ENCODE measurements at regions of chr11 and their contacts with region 1.

Region 1: GRCh38 chr11:7367803-7368202 is 116.1 kb downstream of the SYT9 start:
- DNase-seq: no peak
- H3K4me3 ChIP-seq: no peak overlapping the region
- H3K4me3 Mint-ChIP-seq: peak overlapping the region; percentile 32
- H3K27ac Mint-ChIP-seq: no peak overlapping the region
- H3K4me1 ChIP-seq: no peaks in the 10 kb centered on the region
- H3K4me1 Mint-ChIP-seq: no peaks in the 10 kb centered on the region
- H3K27me3 ChIP-seq: no peaks in the 10 kb centered on the region
- H3K27me3 Mint-ChIP-seq: peaks cover 13% of the 10 kb centered on the region
- CTCF ChIP-seq: no peak

Region 2: DNA sequence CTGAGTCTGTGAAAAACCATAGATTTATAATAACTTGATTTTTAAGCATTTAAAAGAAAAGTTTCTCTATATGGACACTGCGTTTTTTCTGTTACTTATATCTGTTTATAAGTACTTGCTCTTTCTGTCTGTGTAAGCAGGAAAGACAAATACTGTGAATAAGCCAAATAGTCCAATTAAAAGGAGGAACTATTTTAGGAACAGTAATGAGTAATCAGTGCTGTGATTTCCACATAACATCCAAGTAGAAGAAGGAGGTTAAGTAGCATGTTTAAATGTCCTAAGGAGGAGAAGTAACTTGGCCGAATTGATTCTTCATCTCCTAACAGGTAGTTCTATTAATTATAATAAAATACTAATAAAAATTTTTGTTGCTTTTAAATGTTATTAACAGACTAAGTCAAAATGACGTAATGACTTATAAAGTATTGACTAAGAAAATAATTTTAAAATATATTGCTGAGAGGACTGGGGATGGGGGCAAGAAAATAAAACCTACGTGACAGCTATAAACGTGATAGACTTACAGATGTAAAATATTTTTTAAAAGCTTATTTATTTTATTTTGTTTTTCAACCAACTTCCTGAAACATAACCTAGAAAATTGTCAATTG is 388.3 kb before region 1 on chr11:
- CTCF ChIA-PET with region 1: no interaction called
- POLR2A ChIA-PET with region 1: no interaction called
- intact Hi-C with region 1: no loop called
- DNase-seq: no peak
- H3K4me3 ChIP-seq: no peak overlapping the region
- H3K4me3 Mint-ChIP-seq: no peak overlapping the region
- H3K27ac Mint-ChIP-seq: no peak overlapping the region
- H3K4me1 ChIP-seq: no peaks in the 10 kb centered on the region
- H3K4me1 Mint-ChIP-seq: no peaks in the 10 kb centered on the region
- H3K27me3 ChIP-seq: no peaks in the 10 kb centered on the region
- H3K27me3 Mint-ChIP-seq: no peaks in the 10 kb centered on the region
- CTCF ChIP-seq: no peak

Region 3: GRCh38 chr11:7299393-7299792 is 68.4 kb before region 1 on chr11:
- CTCF ChIA-PET with region 1: no interaction called
- POLR2A ChIA-PET with region 1: no interaction called
- intact Hi-C with region 1: no loop called
- DNase-seq: no peak
- H3K4me3 ChIP-seq: no peak overlapping the region
- H3K4me3 Mint-ChIP-seq: no peak overlapping the region
- H3K27ac Mint-ChIP-seq: no peak overlapping the region
- H3K4me1 ChIP-seq: no peaks in the 10 kb centered on the region
- H3K4me1 Mint-ChIP-seq: no peaks in the 10 kb centered on the region
- H3K27me3 ChIP-seq: no peaks in the 10 kb centered on the region
- H3K27me3 Mint-ChIP-seq: peaks cover 4% of the 10 kb centered on the region
- CTCF ChIP-seq: no peak

Region 4: GRCh38 chr11:7347611-7348431 is 20.0 kb before region 1 on chr11:
- CTCF ChIA-PET with region 1: no interaction called
- POLR2A ChIA-PET with region 1: no interaction called
- intact Hi-C with region 1: loop called (anchors 2 kb)
- DNase-seq: no peak
- H3K4me3 ChIP-seq: no peak overlapping the region
- H3K4me3 Mint-ChIP-seq: no peak overlapping the region
- H3K27ac Mint-ChIP-seq: no peak overlapping the region
- H3K4me1 ChIP-seq: no peaks in the 10 kb centered on the region
- H3K4me1 Mint-ChIP-seq: no peaks in the 10 kb centered on the region
- H3K27me3 ChIP-seq: no peaks in the 10 kb centered on the region; the same call in none of the 2 replicates
- H3K27me3 Mint-ChIP-seq: peaks cover 26% of the 10 kb centered on the region
- CTCF ChIP-seq: no peak

Measured in Caco-2 (cell line).